ENCODE measurements at regions of chr10 and their contacts with region 1.

Region 1: DNA sequence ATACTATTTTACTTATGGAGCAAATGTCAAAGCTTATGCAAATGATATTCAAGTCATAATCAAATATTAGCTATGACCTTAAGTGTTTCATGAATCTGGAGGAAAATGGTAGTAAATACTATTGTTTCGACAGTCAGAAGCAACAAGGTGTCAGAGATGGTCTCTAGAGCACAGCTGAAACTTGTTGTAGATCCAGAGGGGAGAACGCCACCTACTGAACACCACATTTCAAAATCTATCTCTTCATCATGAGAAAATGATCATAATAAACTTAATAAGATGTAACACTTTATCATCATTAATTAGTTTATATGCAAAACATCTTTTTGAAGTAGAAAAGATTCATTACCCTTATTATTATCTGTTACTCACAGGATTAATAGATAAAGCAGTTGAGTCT is 418.7 kb downstream of the GATA3 start:
- DNase-seq: no peak
- ATAC-seq: no peak
- H3K4me3 ChIP-seq: no peak overlapping the region
- H3K27ac ChIP-seq: no peak overlapping the region
- H3K4me1 ChIP-seq: no peaks in the 10 kb centered on the region
- H3K27me3 ChIP-seq: no peaks in the 10 kb centered on the region
- CTCF ChIP-seq: no peak; a peak in 1 of 6 replicates
- EP300 ChIP-seq: no peak
- POLR2A ChIP-seq: no peak
- RAD21 ChIP-seq: peak in 1 of 2 experiments; percentile 14; a peak in 1 of 4 replicates

Region 2: DNA sequence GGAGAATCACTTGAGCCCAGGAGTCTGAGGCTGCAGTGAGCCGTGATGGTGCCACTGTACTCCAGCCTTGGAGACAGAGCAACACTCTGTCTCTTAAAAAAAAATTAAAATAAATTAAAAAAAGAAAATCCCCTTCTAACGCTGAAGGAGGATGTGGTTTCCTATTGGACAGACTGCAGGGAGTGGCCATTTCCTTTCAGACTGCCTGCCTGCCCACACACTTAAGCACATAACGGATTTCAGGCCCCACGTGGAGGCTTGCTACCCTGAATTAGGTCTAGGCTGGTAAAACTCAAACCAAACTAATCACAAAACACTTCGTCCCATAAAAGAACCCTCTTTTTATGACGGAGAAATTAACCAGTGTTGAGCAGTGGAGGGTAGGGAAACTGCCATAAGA is 384.7 kb before region 1 on chr10:
- CTCF ChIA-PET with region 1: no interaction called
- POLR2A ChIA-PET with region 1: no interaction called
- in situ Hi-C with region 1: no loop called
- intact Hi-C with region 1: no loop called
- DNase-seq: no peak
- ATAC-seq: no peak
- H3K4me3 ChIP-seq: no peak overlapping the region
- H3K27ac ChIP-seq: no peak overlapping the region
- H3K4me1 ChIP-seq: peaks cover 0 to 1% of the 10 kb centered on the region in 2 experiments; a peak in 1 of 5 replicates
- H3K27me3 ChIP-seq: peaks cover 10 to 24% of the 10 kb centered on the region in 2 experiments
- CTCF ChIP-seq: no peak
- EP300 ChIP-seq: no peak
- POLR2A ChIP-seq: no peak
- RAD21 ChIP-seq: no peak

Region 3: DNA sequence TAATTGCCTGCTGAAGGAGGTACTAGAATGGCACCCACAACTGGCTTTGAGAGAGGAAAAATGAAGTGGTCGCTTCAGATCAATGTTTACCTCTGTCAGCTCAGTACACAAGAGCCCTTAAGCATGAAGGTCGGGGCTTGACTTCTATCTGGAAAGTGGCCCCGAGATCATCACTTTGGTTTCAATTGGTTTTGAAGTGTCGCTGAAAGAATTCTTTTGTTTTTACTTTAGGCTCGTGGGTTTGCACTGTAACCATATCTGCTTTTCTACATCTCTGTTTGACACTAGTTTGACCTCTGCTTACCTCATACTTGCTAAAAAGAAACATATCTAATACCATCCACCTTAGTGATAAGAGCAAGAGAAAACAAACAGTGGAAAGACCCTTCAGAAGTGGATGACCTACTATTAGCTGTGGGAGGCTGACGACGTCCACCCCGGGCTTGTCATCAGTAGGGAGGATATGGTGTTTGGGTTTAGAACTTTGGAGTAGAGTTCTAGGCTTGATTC is 57.0 kb before region 1 on chr10:
- CTCF ChIA-PET with region 1: no interaction called
- POLR2A ChIA-PET with region 1: no interaction called
- in situ Hi-C with region 1: no loop called
- intact Hi-C with region 1: loop called (anchors 10 kb)
- DNase-seq: no peak
- ATAC-seq: no peak
- H3K4me3 ChIP-seq: no peak overlapping the region
- H3K27ac ChIP-seq: no peak overlapping the region
- H3K4me1 ChIP-seq: no peaks in the 10 kb centered on the region
- H3K27me3 ChIP-seq: no peaks in the 10 kb centered on the region
- CTCF ChIP-seq: no peak
- EP300 ChIP-seq: no peak
- POLR2A ChIP-seq: no peak
- RAD21 ChIP-seq: no peak

Region 4: DNA sequence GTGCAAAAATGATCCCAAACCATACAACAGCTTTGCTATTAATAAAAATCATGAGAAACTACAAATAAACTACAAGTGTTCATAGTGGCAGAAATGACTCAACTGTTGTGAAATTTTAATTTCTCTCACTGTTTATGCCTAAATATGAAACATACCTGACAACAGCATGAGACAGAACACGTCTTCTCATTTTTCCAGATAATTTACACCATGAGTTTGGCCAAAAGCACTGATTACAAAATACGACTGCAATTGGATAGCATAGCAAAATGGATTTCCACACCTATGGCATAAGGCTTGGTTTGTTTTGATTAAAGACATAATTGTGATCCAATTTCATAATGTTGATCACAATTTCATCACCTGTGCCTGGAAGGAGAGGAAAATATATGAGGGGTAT is 189.9 kb after region 1 on chr10:
- CTCF ChIA-PET with region 1: no interaction called
- POLR2A ChIA-PET with region 1: no interaction called
- in situ Hi-C with region 1: no loop called
- intact Hi-C with region 1: no loop called
- DNase-seq: no peak
- ATAC-seq: no peak
- H3K4me3 ChIP-seq: no peak overlapping the region
- H3K27ac ChIP-seq: no peak overlapping the region
- H3K4me1 ChIP-seq: no peaks in the 10 kb centered on the region
- H3K27me3 ChIP-seq: no peaks in the 10 kb centered on the region
- CTCF ChIP-seq: no peak
- EP300 ChIP-seq: no peak
- POLR2A ChIP-seq: no peak
- RAD21 ChIP-seq: no peak

Measured in K562 (cell line).